Right ventricle myocardium inferior (tissue), 1 donor: ENCODE measurements at regions of chr1 and their contacts with region 1.

Region 1: DNA sequence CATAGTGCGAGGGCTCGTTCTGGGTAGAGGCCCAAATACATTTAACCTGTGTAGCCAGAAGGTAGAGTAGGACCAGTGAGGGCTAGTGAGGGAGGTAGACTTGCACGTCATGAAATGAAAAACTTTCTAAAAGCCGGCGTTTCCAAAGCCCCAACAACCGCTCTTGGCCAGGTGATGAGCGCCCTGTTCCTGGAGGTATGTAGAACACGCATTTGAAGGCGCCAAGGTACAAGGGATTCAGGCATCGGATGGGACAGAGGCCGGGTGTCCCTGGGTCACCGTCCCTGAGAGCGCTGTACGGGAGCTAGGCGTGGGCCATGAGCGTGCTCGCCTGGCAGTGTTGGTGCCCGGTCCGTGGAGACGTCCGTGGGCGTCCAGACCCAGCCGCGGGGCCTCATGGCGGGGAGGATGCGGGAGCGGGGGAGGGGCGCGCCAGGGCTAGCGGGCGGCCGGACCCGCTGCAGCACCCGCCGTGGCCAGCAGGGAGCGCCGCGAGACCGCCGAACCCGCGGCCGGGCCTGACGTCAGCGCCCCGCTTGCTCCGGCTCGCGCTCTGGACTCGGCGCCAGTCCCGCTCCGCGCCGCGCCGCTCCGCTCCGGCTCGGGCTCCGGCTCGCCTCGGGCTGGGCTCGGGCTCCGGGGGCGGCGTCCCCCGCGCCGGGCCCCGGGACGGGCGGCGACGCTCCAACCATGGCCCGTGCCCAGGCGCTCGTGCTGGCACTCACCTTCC is at the start of gene PTPRU:
- DNase-seq: peak; percentile 90
- ATAC-seq: peak; percentile 84
- total RNA-seq, gene PTPRU: 23.5 TPM

Region 2: GRCh38 chr1:29703596-29704370 is 467.7 kb after region 1 on chr1:
- intact Hi-C with region 1: loop called (anchors 5 kb)
- DNase-seq: no peak
- ATAC-seq: no peak

Region 3: GRCh38 chr1:29793101-29793546 is 557.0 kb after region 1 on chr1:
- intact Hi-C with region 1: loop called (anchors 5 kb)
- DNase-seq: no peak
- ATAC-seq: peak; percentile 62

Region 4: GRCh38 chr1:30111431-30111830 is 875.3 kb after region 1 on chr1:
- intact Hi-C with region 1: loop called (anchors 2 kb)
- DNase-seq: no peak
- ATAC-seq: peak; percentile 62

Region 5: GRCh38 chr1:30379684-30380624 is 1143.8 kb after region 1 on chr1:
- intact Hi-C with region 1: loop called (anchors 2 kb)
- DNase-seq: no peak
- ATAC-seq: peak; percentile 64